IMR-90 (cell line): ENCODE measurements at regions of chr11 and their contacts with region 1.

Region 1: GRCh38 chr11:11036848-11037732 is 179.2 kb upstream of the ZBED5 start:
- DNase-seq: peak; percentile 66
- ATAC-seq: peak; percentile 35; the same call in 1 of the 2 replicates
- H3K4me3 ChIP-seq: no peak overlapping the region
- H3K27ac ChIP-seq: no peak overlapping the region
- H3K4me1 ChIP-seq: peaks cover 17% of the 10 kb centered on the region
- H3K27me3 ChIP-seq: no peaks in the 10 kb centered on the region; the same call in 1 of the 2 replicates
- CTCF ChIP-seq: peak; percentile 57
- POLR2A ChIP-seq: no peak
- RAD21 ChIP-seq: peak; percentile 60

Region 2: GRCh38 chr11:10824888-10825287 is 212.2 kb before region 1 on chr11:
- CTCF ChIA-PET with region 1: no interaction called
- POLR2A ChIA-PET with region 1: interaction called, 20 read pairs
- dilution Hi-C with region 1: no loop called
- in situ Hi-C with region 1: no loop called
- intact Hi-C with region 1: no loop called
- DNase-seq: no peak
- ATAC-seq: no peak
- H3K4me3 ChIP-seq: no peak overlapping the region
- H3K27ac ChIP-seq: no peak overlapping the region
- H3K4me1 ChIP-seq: peaks cover 1% of the 10 kb centered on the region; the same call in 1 of the 2 replicates
- H3K27me3 ChIP-seq: no peaks in the 10 kb centered on the region
- CTCF ChIP-seq: no peak
- POLR2A ChIP-seq: no peak
- RAD21 ChIP-seq: no peak

Region 3: GRCh38 chr11:11148104-11148509 is 111.0 kb after region 1 on chr11:
- CTCF ChIA-PET with region 1: no interaction called
- POLR2A ChIA-PET with region 1: no interaction called
- dilution Hi-C with region 1: no loop called
- in situ Hi-C with region 1: no loop called
- intact Hi-C with region 1: loop called (anchors 5 kb)
- DNase-seq: peak; percentile 74
- ATAC-seq: peak; percentile 100
- H3K4me3 ChIP-seq: no peak overlapping the region
- H3K27ac ChIP-seq: 0 out of 2 replicates have a peak overlapping the region, but pooled peaks have one; percentile 1
- H3K4me1 ChIP-seq: 0 out of 2 replicates have a peak, but pooled peaks cover 3% of the 10 kb centered on the region
- H3K27me3 ChIP-seq: peaks cover 22% of the 10 kb centered on the region
- CTCF ChIP-seq: peak; percentile 35; the same call in 1 of the 2 replicates
- POLR2A ChIP-seq: no peak
- RAD21 ChIP-seq: no peak

Region 4: GRCh38 chr11:11621573-11622319 is 584.7 kb after region 1 on chr11 and contains the start of gene GALNT18:
- CTCF ChIA-PET with region 1: no interaction called
- POLR2A ChIA-PET with region 1: no interaction called
- dilution Hi-C with region 1: no loop called
- in situ Hi-C with region 1: no loop called
- intact Hi-C with region 1: loop called (anchors 5 kb)
- DNase-seq: peak; percentile 90
- ATAC-seq: peak; percentile 99
- H3K4me3 ChIP-seq: peak within 1 kb of the TSS; percentile 48
- H3K27ac ChIP-seq: no peak within 1 kb of the TSS; the same call in 1 of the 2 replicates
- H3K4me1 ChIP-seq: peaks cover 4% of the 10 kb centered on the region
- H3K27me3 ChIP-seq: peaks cover 21% of the 10 kb centered on the region
- CTCF ChIP-seq: peak; percentile 50
- POLR2A ChIP-seq: peak; percentile 81
- RAD21 ChIP-seq: peak; percentile 2; the same call in 1 of the 2 replicates
- total RNA-seq, gene GALNT18: 9.4 and 11.3 TPM in 2 replicates